Heart right ventricle (tissue), 16 donors: ENCODE measurements at regions of chr1 and their contacts with region 1.

Region 1: GRCh38 chr1:107829061-107830040 is 135.6 kb downstream of the VAV3 start:
- DNase-seq: no peak
- ATAC-seq: peak in 1 of 8 donors; percentile 41
- H3K4me3 ChIP-seq: no peak overlapping the region
- H3K27ac ChIP-seq: peak overlapping the region in 3 of 10 donors; percentile 22 to 66 (median 59)
- H3K4me1 ChIP-seq: peaks cover 0 to 46% (median 8%) of the 10 kb centered on the region in 9 donors
- H3K27me3 ChIP-seq: no peaks in the 10 kb centered on the region
- CTCF ChIP-seq: no peak

Region 2: DNA sequence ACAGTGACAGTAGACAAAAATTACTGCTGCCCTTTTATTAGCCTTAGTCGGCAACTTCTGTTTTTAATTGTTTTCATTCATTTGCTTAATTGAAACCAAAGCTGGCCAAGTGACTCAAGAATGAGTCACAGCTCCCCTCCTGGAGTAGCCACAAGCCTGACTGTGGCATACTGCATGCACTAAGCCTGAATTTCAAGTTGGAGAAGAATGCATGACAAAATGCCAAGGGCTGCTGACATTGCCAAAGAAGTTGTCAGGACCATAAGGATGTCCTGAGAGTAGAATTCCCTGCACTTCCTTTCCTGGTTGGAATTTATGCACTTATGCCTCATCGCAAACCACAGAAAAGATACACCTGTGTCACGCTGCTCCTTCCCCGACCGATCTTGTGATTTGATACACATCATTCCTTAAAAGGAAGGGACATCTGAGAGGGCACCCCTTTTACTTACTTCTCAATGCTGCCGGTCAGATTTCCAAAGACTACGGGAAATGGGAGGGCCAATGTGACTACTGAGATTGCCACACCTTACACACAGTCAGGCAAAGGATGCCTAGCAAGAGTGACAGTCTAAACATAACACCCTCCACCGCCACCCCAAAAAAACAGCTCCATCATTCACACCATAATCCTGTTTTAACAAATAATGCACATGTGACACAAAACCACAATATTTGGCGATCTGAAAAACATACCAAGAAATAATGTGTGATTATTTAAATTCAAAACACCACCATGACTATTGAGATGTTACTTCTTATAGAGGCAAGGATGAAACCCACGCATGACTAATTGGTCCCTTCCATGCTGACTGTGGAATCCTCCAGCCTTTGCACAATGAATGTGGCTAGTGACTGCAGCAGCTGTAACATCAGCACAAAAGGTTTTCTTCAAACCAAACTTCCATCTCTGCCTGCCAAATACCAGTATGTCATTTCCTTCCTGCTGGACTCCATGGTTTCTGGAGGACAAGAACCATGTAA is 107.4 kb after region 1 on chr1:
- intact Hi-C with region 1: loop called in 1 of 10 experiments (anchors 10 kb)
- DNase-seq: peak in 1 of 2 donors; percentile 51
- ATAC-seq: peak; percentile 66 to 89 (median 82)
- H3K4me3 ChIP-seq: peak overlapping the region in 1 of 10 donors; percentile 2
- H3K27ac ChIP-seq: peak overlapping the region in 8 of 10 donors; percentile 16 to 86 (median 54)
- H3K4me1 ChIP-seq: peaks cover 0 to 85% (median 26%) of the 10 kb centered on the region in 9 donors
- H3K27me3 ChIP-seq: no peaks in the 10 kb centered on the region
- CTCF ChIP-seq: no peak